HEK293T (cell line): ENCODE measurements at regions of chr10 and their contacts with region 1.

Region 1: GRCh38 chr10:75294866-75295701 is 59.3 kb upstream of the COMTD1 start:
- DNase-seq: peak; percentile 87

Region 2: GRCh38 chr10:75202321-75203045 is 92.6 kb before region 1 on chr10:
- CTCF ChIA-PET with region 1: no interaction called
- POLR2A ChIA-PET with region 1: no interaction called
- DNase-seq: no peak

Region 3: GRCh38 chr10:75283671-75284470 is 11.2 kb before region 1 on chr10:
- CTCF ChIA-PET with region 1: interaction called, 3 read pairs
- POLR2A ChIA-PET with region 1: interaction called, 25 read pairs
- DNase-seq: peak; percentile 54

Region 4: DNA sequence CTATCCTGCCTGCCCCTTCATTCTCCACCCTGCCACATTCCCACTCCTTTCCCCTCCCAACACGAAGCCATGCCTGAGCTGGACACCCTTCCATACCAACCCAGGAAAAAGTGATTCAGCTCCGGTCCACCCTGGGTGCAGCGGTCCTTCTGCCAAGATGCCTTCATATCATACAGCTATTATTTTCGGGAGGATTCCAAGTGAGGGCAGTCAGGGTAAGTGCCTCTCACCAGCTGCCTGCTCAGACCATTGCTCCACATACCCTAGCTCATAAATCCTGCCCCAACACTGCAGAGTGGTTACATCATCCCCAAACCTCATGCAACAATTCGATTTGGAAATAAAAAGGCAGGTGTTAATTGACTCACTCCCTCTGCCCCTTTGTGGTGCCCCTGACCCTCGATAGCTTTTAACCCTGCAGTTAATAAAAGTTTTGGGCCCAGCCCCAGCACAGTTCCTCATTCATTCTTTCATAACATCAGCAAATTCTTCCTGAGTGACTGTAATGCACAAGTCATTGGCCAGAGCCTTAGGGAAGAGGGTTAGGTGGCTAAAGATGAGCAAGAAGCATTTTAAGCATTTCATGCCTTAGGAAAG is 63.8 kb after region 1 on chr10:
- CTCF ChIA-PET with region 1: interaction called, 11 read pairs
- POLR2A ChIA-PET with region 1: interaction called, 62 read pairs
- DNase-seq: peak; percentile 50

Region 5: GRCh38 chr10:75379212-75379724 is 84.2 kb after region 1 on chr10:
- CTCF ChIA-PET with region 1: interaction called, 3 read pairs
- POLR2A ChIA-PET with region 1: interaction called, 52 read pairs
- DNase-seq: peak; percentile 68

Region 6: DNA sequence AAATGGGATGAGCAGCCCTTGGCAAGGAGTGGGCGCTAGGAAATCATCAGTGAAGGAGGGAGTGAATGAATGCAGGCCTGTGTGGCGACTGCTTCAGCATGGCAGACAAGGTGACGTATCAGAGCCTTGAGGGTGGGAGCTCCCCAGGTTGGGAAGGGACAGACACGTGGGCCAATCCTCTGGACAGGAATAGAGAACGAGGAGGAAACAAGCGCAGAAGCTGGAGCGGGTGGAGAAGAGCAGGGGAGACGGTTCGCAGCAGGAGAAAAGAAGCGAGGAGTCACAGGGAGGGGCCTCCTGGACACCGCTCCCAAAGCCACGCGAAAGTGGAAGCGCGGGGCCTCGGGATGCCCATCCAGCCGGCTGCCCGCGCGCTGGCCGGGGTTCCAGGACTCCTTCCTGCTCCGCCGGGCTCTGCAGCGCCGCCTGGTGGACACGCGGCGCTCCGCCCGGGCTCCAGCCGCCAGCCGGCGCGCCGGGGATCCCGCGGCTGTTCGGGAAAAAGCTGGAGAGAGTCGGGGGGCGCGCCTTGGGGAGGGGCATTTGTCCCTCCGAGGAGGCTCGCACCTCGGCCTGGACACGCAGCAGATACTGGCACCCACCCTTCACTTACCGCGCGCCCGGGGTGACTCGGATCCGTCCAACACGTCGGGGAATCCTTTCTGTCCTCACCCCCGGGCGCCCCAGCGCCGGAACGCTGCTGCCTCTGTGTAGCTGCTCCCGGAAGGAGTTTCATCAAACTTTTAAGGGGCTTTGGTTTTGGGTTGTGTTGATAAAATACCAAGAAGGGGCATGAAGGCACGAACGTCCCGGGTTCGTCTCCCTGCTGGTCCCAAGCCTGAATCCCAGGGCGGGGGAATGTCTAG is 100.2 kb after region 1 on chr10:
- CTCF ChIA-PET with region 1: interaction called, 22 read pairs
- POLR2A ChIA-PET with region 1: interaction called, 178 read pairs
- DNase-seq: no peak